GM12878 (cell line): ENCODE measurements at regions of chr16 and their contacts with region 1.

Region 1: DNA sequence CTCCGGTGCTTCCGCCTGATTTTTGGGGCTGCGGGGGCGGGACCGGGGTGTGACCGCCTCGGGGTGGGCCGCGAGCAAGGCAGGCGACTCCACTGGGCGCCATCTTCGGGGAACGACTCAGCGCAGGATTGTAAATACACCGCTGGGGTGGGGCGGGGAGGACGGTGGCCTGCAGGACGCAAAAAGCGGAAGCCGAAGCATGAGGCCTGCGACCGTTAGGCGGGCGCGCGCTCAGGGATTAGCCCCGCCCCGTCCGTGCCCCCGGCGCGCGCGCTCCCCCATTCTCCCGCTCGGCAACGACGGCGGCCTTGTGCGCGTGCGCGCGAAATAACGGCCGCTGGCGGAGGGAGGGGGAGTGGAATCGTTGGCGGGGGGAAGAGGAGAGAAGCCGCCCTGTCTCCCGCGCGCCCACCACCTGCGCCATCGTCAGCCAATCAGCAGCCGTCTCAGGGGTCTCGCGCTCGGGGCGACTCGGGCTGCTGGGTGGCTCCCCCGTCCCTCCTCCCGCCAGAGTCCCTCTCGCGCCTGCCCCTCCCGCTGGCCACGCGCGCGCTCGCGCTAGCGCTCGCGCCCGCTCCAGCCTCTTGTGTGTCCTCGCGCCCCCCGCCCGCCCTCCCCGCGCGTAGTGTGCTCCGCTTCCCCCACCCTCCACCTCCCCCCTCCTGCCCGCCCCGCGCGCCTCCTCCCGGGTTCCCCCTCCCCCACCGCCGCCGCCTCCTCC is 791 bp upstream of the MAZ start:
- DNase-seq: peak; percentile 76
- ATAC-seq: peak; percentile 78
- H3K4me3 ChIP-seq: peak overlapping the region; percentile 73
- H3K27ac ChIP-seq: peak overlapping the region; percentile 91
- H3K4me1 ChIP-seq: peaks cover 23% of the 10 kb centered on the region
- H3K27me3 ChIP-seq: no peaks in the 10 kb centered on the region
- CTCF ChIP-seq: 0 out of 6 replicates have a peak, but pooled peaks of 1 of the 3 experiments have one; percentile 0
- EP300 ChIP-seq: peak; percentile 46 to 79; a peak in 2 of 4 replicates
- POLR2A ChIP-seq: peak; percentile 95
- RAD21 ChIP-seq: no peak

Region 2: GRCh38 chr16:29790183-29790952 is 15.2 kb before region 1 on chr16 and contains the start of gene KIF22:
- CTCF ChIA-PET with region 1: interaction called, 24 read pairs
- POLR2A ChIA-PET with region 1: interaction called, 24 read pairs
- RAD21 ChIA-PET with region 1: interaction called, 7 read pairs
- SMC1A ChIA-PET with region 1: interaction called, 38 read pairs
- in situ Hi-C with region 1: no loop called
- intact Hi-C with region 1: loop called (anchors 1 kb)
- DNase-seq: peak; percentile 97
- ATAC-seq: peak; percentile 98
- H3K4me3 ChIP-seq: peak within 1 kb of the TSS; percentile 93
- H3K27ac ChIP-seq: peak within 1 kb of the TSS; percentile 95
- H3K4me1 ChIP-seq: peaks cover 9% of the 10 kb centered on the region; the same call in 1 of the 2 replicates
- H3K27me3 ChIP-seq: no peaks in the 10 kb centered on the region
- CTCF ChIP-seq: peak; percentile 79 to 92 (median 89)
- EP300 ChIP-seq: no peak
- POLR2A ChIP-seq: peak; percentile 97
- RAD21 ChIP-seq: peak; percentile 61
- polyA plus RNA-seq, gene KIF22: 7.6 to 16.9 TPM

Region 3: GRCh38 chr16:30091474-30092372 is 286.2 kb after region 1 on chr16 and contains the start of gene TBX6:
- CTCF ChIA-PET with region 1: no interaction called
- POLR2A ChIA-PET with region 1: no interaction called
- RAD21 ChIA-PET with region 1: no interaction called
- SMC1A ChIA-PET with region 1: no interaction called
- in situ Hi-C with region 1: no loop called
- intact Hi-C with region 1: no loop called
- DNase-seq: peak; percentile 64
- ATAC-seq: peak; percentile 88
- H3K4me3 ChIP-seq: peak within 1 kb of the TSS; percentile 72
- H3K27ac ChIP-seq: peak within 1 kb of the TSS; percentile 88
- H3K4me1 ChIP-seq: peaks cover 26% of the 10 kb centered on the region
- H3K27me3 ChIP-seq: no peaks in the 10 kb centered on the region
- CTCF ChIP-seq: peak; percentile 82 to 95 (median 83)
- EP300 ChIP-seq: no peak
- POLR2A ChIP-seq: peak; percentile 84
- RAD21 ChIP-seq: peak; percentile 58
- polyA plus RNA-seq, gene TBX6: not detected